ENCODE measurements at regions of chr1 and their contacts with region 1.

Region 1: DNA sequence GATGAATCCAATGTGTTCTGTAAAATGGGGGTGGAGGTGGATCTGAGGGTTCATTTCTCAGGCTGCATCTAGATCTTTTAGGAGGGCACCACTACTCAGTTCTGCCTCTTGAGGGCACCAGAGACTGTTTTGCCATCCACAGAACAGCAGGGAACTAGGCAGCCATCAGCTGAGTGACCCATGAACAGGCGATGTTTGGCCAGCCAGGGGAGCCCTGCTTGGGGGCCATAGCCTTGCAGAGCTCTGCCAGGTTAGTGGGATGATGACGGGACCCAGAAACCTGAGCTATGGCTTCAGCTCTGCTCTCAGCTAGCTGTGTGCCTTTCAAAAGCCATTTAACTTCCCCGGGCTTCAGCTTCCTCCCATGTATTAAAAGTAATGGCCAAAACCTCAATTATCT is 13.4 kb upstream of the NOS1AP start:
- DNase-seq: peak; percentile 40 to 56
- ATAC-seq: peak; percentile 88 to 95 (median 94)
- H3K4me3 ChIP-seq: no peak overlapping the region
- H3K27ac ChIP-seq: no peak overlapping the region
- H3K4me1 ChIP-seq: no peaks in the 10 kb centered on the region
- H3K27me3 ChIP-seq: no peaks in the 10 kb centered on the region
- CTCF ChIP-seq: peak; percentile 89

Region 2: GRCh38 chr1:161801955-161802354 is 254.1 kb before region 1 on chr1:
- intact Hi-C with region 1: no loop called
- DNase-seq: no peak
- ATAC-seq: no peak
- H3K4me3 ChIP-seq: no peak overlapping the region
- H3K27ac ChIP-seq: no peak overlapping the region
- H3K4me1 ChIP-seq: no peaks in the 10 kb centered on the region
- H3K27me3 ChIP-seq: no peaks in the 10 kb centered on the region
- CTCF ChIP-seq: no peak

Region 3: DNA sequence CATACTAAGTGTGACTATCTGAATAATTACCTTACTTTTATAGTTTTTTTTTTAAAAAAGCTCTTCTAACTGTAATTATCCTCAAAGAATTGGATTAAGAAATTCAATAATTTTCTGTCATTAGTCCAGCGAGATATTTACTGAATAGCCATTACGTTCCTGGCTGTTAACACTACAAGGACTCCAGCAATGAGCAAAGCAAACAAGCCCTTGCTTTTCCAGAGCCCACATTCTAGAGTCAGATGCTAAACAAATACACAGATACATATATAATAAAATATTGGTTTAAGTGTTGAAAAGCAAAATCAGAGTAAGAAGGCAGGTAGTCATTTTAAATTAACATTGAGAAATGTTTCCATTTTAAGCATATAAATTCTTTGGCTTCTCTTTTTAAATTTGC is 171.6 kb before region 1 on chr1:
- intact Hi-C with region 1: no loop called
- DNase-seq: no peak
- ATAC-seq: no peak
- H3K4me3 ChIP-seq: peak overlapping the region; percentile 23
- H3K27ac ChIP-seq: no peak overlapping the region
- H3K4me1 ChIP-seq: peaks cover 32% of the 10 kb centered on the region
- H3K27me3 ChIP-seq: no peaks in the 10 kb centered on the region
- CTCF ChIP-seq: no peak

Region 4: GRCh38 chr1:162040681-162041080 is 15.4 kb before region 1 on chr1:
- intact Hi-C with region 1: no loop called
- DNase-seq: no peak
- ATAC-seq: no peak
- H3K4me3 ChIP-seq: no peak overlapping the region
- H3K27ac ChIP-seq: no peak overlapping the region
- H3K4me1 ChIP-seq: no peaks in the 10 kb centered on the region
- H3K27me3 ChIP-seq: no peaks in the 10 kb centered on the region
- CTCF ChIP-seq: no peak

Region 5: DNA sequence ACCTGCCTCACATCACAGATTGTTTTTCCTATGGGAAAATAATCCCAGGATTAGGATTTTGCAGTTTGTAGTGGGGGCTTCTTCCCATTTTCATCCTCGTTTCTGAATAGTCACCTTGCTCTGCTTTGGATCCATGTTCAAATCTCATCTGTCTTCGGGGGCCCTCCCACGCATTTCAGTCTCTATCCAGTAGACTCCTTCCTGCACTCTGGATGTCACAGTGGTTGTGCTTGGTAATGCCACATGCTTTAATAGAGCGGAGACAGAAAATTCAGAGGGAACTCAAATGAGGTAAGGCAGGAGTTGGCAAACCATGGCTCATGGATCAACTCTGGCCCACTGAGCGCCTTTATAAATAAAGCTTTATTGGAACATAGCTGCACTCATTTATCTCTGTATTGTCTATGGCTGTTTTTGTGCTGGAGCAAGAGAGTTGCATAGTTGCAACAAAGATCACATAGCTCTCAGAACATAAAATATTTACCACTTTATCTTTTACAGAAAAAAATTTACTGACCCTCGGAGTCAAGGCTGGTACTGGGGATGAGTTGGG is 219.7 kb after region 1 on chr1:
- intact Hi-C with region 1: loop called (anchors 2 to 5 kb)
- DNase-seq: no peak
- ATAC-seq: no peak
- H3K4me3 ChIP-seq: no peak overlapping the region
- H3K27ac ChIP-seq: no peak overlapping the region
- H3K4me1 ChIP-seq: no peaks in the 10 kb centered on the region
- H3K27me3 ChIP-seq: no peaks in the 10 kb centered on the region
- CTCF ChIP-seq: no peak

Region 6: DNA sequence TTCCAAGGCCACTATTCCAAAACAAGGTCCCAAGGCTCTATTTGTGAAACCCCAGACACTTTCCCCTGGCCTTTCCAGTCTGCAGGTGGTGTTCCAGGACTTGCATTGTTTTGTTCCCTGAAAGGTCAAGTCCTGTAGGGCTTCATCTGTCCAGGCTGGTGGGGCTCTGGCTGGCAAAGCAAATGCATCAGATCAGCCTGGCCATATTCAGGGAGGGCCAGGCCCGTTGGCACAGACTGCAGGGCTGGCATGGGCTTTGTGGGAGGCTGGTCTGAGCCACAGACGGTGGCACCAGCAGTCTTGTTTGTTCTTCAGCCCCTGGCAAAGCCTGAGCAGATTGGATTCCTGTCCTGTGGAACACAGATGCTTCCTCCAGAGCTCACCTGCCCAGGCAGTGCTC is 227.6 kb after region 1 on chr1:
- intact Hi-C with region 1: loop called in 1 of 2 experiments (anchors 5 kb)
- DNase-seq: no peak
- ATAC-seq: no peak
- H3K4me3 ChIP-seq: no peak overlapping the region
- H3K27ac ChIP-seq: no peak overlapping the region
- H3K4me1 ChIP-seq: peaks cover 17% of the 10 kb centered on the region
- H3K27me3 ChIP-seq: no peaks in the 10 kb centered on the region
- CTCF ChIP-seq: no peak

Region 7: GRCh38 chr1:162391790-162392563 is 335.9 kb after region 1 on chr1:
- intact Hi-C with region 1: loop called (anchors 1 to 5 kb)
- DNase-seq: no peak
- ATAC-seq: peak in 1 of 4 donors; percentile 64
- H3K4me3 ChIP-seq: no peak overlapping the region
- H3K27ac ChIP-seq: no peak overlapping the region
- H3K4me1 ChIP-seq: no peaks in the 10 kb centered on the region
- H3K27me3 ChIP-seq: peaks cover 0 to 18% (median 2%) of the 10 kb centered on the region in 3 donors
- CTCF ChIP-seq: peak; percentile 74

Region 8: DNA sequence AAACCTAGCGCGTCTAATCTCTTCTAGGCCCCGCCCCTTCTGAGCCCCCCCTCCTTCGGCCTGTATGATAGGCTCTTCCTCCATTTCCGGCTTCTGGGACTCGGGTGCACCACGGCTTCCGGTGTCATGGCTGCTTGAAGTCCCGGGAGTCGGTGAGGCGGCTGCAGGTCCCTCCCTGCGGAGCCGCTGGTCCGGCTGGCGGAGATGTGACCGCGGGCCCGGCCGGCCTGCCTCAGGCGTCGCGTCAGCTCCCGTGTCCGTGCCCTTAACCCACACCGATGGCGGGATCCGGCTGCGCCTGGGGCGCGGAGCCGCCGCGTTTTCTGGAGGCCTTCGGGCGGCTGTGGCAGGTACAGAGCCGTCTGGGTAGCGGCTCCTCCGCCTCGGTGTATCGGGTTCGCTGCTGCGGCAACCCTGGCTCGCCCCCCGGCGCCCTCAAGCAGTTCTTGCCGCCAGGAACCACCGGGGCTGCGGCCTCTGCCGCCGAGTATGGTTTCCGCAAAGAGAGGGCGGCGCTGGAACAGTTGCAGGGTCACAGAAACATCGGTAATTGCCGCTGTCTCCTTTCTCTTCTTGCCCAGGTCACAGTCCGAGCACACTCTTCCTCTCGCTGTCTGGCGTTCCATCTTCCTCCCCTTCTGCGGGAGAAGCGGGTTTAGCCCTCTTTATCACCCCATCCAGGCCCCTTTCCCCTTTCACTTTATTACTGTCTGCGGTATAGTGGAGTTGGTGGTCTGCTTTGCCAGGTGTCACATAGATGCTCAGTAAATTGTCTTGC is 441.9 kb after region 1 on chr1 and contains the start of gene UHMK1:
- intact Hi-C with region 1: loop called in 1 of 2 experiments (anchors 10 kb)
- DNase-seq: peak; percentile 91 to 94
- ATAC-seq: peak; percentile 99 to 100 (median 99)
- H3K4me3 ChIP-seq: peak within 1 kb of the TSS; percentile 99
- H3K27ac ChIP-seq: peak within 1 kb of the TSS; percentile 96
- H3K4me1 ChIP-seq: peaks cover 33% of the 10 kb centered on the region
- H3K27me3 ChIP-seq: no peaks in the 10 kb centered on the region
- CTCF ChIP-seq: no peak
- total RNA-seq, gene UHMK1: 24.3 to 62.1 (median 40.5) TPM

Region 9: GRCh38 chr1:162822391-162823200 is 766.6 kb after region 1 on chr1:
- intact Hi-C with region 1: no loop called
- DNase-seq: no peak
- ATAC-seq: peak in 2 of 4 donors; percentile 37 to 41
- H3K4me3 ChIP-seq: peak overlapping the region; percentile 58
- H3K27ac ChIP-seq: no peak overlapping the region
- H3K4me1 ChIP-seq: peaks cover 4% of the 10 kb centered on the region
- H3K27me3 ChIP-seq: peaks cover 3 to 22% (median 4%) of the 10 kb centered on the region in 3 donors
- CTCF ChIP-seq: no peak

Measured in psoas muscle (tissue), 8 donors.